Naive thymus-derived CD4-positive, alpha-beta T cell (primary cell): ENCODE measurements at regions of chr2 and their contacts with region 1.

Region 1: DNA sequence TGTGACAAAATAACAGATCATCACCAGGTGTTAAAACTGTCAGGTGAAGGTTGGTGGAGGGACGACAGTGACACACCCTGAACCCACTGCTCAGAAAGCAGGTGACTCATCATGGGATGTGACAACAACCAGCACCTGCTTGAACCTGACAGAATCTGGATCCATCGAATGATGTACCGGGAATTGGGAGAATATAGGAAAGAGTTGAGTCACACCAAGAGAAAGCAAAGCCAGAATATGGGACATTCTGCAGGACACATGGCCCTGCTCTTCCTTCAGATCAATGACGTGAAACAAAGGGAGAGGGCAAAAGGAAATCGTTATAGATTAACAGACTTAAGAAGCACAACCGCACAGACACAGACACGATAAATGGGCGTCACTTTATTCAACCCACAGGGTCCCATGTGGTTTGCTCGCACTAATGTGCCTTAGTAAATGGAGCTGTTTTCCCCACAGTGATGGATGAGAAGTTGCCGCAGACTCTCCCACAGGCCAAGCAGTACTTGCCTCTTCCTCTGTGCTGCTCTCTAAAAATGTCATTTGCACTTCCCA is 100.1 kb downstream of the CRACDL start:
- DNase-seq: peak in 7 of 9 donors; percentile 55 to 78 (median 72)
- ATAC-seq: peak; percentile 87
- H3K4me3 ChIP-seq: peak overlapping the region; percentile 1
- H3K4me3 Mint-ChIP-seq: peak overlapping the region; percentile 32 to 79 (median 52)
- H3K27ac ChIP-seq: peak overlapping the region; percentile 66
- H3K27ac Mint-ChIP-seq: peak overlapping the region; percentile 78 to 98 (median 88)
- H3K4me1 ChIP-seq: peaks cover 16 to 43% of the 10 kb centered on the region in 2 donors
- H3K4me1 Mint-ChIP-seq: peaks cover 24 to 51% (median 28%) of the 10 kb centered on the region in 7 donors
- H3K27me3 ChIP-seq: no peaks in the 10 kb centered on the region
- H3K27me3 Mint-ChIP-seq: peaks cover 0 to 17% (median 0%) of the 10 kb centered on the region in 5 donors

Region 2: GRCh38 chr2:98450965-98451364 is 384.9 kb before region 1 on chr2:
- CTCF ChIA-PET with region 1: no interaction called
- POLR2A ChIA-PET with region 1: no interaction called
- intact Hi-C with region 1: no loop called
- DNase-seq: no peak
- ATAC-seq: no peak
- H3K4me3 ChIP-seq: no peak overlapping the region
- H3K4me3 Mint-ChIP-seq: peak overlapping the region in 9 of 10 donors; percentile 10 to 99 (median 73)
- H3K27ac ChIP-seq: no peak overlapping the region
- H3K27ac Mint-ChIP-seq: peak overlapping the region in 8 of 9 donors; percentile 16 to 98 (median 92)
- H3K4me1 ChIP-seq: peaks cover 81 to 89% of the 10 kb centered on the region in 2 donors
- H3K4me1 Mint-ChIP-seq: peaks cover 77 to 98% (median 93%) of the 10 kb centered on the region in 7 donors
- H3K27me3 ChIP-seq: no peaks in the 10 kb centered on the region
- H3K27me3 Mint-ChIP-seq: no peaks in the 10 kb centered on the region

Region 3: GRCh38 chr2:98568881-98569793 is 266.8 kb before region 1 on chr2:
- CTCF ChIA-PET with region 1: interaction called, 3 read pairs
- POLR2A ChIA-PET with region 1: no interaction called
- intact Hi-C with region 1: loop called (anchors 1 kb)
- DNase-seq: peak; percentile 43 to 78 (median 60)
- ATAC-seq: peak; percentile 84
- H3K4me3 ChIP-seq: no peak overlapping the region
- H3K4me3 Mint-ChIP-seq: no peak overlapping the region
- H3K27ac ChIP-seq: no peak overlapping the region
- H3K27ac Mint-ChIP-seq: peak overlapping the region in 8 of 9 donors; percentile 32 to 81 (median 57)
- H3K4me1 ChIP-seq: no peaks in the 10 kb centered on the region
- H3K4me1 Mint-ChIP-seq: peaks cover 0 to 20% (median 7%) of the 10 kb centered on the region in 7 donors
- H3K27me3 ChIP-seq: no peaks in the 10 kb centered on the region
- H3K27me3 Mint-ChIP-seq: no peaks in the 10 kb centered on the region

Region 4: DNA sequence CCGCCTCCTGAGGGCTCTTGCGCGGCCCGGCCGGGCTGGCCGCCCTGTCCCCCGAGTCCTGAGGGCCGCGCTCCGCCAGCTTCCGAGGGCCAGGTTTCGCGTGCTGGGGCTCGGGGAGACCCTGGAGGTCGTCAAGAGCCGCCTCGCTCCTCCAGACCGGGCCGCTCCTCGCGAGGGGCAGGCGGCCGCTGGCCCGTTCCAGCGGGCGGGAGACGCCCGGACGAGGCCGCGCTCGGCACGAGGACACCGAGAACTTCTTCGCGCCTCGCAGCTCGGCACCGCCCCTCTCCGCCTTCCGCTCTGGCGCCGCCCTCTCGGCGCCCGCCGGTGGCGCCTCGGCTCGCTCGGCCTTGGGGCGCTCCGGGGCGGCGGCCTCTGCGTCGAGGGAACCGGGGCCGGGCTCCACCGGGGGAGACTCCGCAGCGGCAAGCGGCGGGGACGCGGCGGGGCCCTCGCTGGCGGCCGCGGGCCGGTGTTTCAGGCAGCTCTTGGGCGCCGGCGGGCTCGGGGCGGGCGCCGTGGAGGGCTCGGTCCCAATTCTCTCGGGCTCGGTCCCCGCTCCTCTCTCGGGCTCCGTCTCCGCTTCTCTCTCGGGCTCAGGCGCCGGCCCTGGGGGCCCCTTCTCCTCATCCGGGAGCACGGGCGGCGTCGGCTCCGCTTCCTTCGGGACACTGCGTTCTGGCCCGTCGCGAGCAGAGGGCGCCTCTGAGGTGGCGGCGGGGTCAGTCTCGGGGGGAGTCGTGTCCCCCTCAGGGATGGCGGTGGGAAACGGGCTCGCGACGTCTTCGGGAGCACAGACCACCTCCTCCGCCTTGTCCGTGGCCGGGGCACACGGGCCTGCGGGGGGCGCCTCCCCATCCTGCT is 13.4 kb before region 1 on chr2:
- CTCF ChIA-PET with region 1: interaction called, 7 read pairs
- POLR2A ChIA-PET with region 1: interaction called, 9 read pairs
- intact Hi-C with region 1: loop called in 1 of 2 experiments (anchors 1 kb)
- DNase-seq: peak; percentile 49 to 78 (median 66)
- ATAC-seq: peak; percentile 94
- H3K4me3 ChIP-seq: peak overlapping the region; percentile 43
- H3K4me3 Mint-ChIP-seq: peak overlapping the region in 9 of 10 donors; percentile 24 to 63 (median 45)
- H3K27ac ChIP-seq: peak overlapping the region; percentile 66
- H3K27ac Mint-ChIP-seq: no peak overlapping the region
- H3K4me1 ChIP-seq: peaks cover 0 to under 1% of the 10 kb centered on the region in 2 donors
- H3K4me1 Mint-ChIP-seq: peaks cover 19 to 40% (median 25%) of the 10 kb centered on the region in 7 donors
- H3K27me3 ChIP-seq: no peaks in the 10 kb centered on the region
- H3K27me3 Mint-ChIP-seq: peaks cover 0 to 9% (median 0%) of the 10 kb centered on the region in 5 donors